ENCODE measurements at regions of chr12 and their contacts with region 1.

Region 1: DNA sequence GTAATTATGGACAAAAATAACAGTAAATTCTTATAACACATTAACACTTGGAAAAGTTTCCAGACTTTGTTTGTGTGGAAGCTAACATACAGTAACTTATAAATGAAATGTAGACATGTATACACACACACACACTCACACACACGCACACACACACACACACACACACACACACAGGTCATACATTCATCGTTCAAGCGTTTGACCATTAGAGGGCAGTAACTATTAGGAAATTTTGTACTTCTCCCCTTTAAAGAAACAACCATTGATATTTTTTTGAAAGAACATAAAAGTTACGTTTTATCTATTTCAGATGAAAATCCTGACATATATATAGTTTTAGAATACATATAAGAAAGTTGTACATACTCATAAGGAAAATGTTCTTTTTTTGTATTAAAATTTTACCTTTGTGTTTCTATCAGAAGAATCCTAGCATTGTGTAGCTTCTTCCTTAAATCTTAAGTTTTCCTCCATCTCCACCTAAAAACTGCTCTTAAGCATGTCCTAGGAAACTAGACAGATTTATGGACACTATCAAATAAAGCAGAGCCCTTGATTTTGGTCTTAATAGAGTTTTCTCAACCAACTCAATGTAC is 29.0 kb downstream of the PTPRQ start:
- DNase-seq: peak; percentile 3 to 47
- H3K4me3 ChIP-seq: no peak overlapping the region
- H3K27ac ChIP-seq: no peak overlapping the region
- H3K4me1 ChIP-seq: no peaks in the 10 kb centered on the region
- H3K27me3 ChIP-seq: no peaks in the 10 kb centered on the region
- CTCF ChIP-seq: peak; percentile 69

Region 2: GRCh38 chr12:80400571-80400991 is 72.4 kb before region 1 on chr12:
- CTCF ChIA-PET with region 1: no interaction called
- POLR2A ChIA-PET with region 1: no interaction called
- intact Hi-C with region 1: no loop called
- DNase-seq: no peak
- H3K4me3 ChIP-seq: no peak overlapping the region
- H3K27ac ChIP-seq: no peak overlapping the region
- H3K4me1 ChIP-seq: no peaks in the 10 kb centered on the region; the same call in 1 of the 2 replicates
- H3K27me3 ChIP-seq: no peaks in the 10 kb centered on the region
- CTCF ChIP-seq: no peak

Region 3: GRCh38 chr12:80598004-80598606 is 125.1 kb after region 1 on chr12:
- CTCF ChIA-PET with region 1: no interaction called
- POLR2A ChIA-PET with region 1: no interaction called
- intact Hi-C with region 1: loop called (anchors 5 kb)
- DNase-seq: no peak
- H3K4me3 ChIP-seq: no peak overlapping the region
- H3K27ac ChIP-seq: no peak overlapping the region
- H3K4me1 ChIP-seq: no peaks in the 10 kb centered on the region
- H3K27me3 ChIP-seq: no peaks in the 10 kb centered on the region
- CTCF ChIP-seq: peak; percentile 32; the same call in 1 of the 2 replicates

Region 4: GRCh38 chr12:80622271-80622670 is 149.3 kb after region 1 on chr12:
- CTCF ChIA-PET with region 1: no interaction called
- POLR2A ChIA-PET with region 1: no interaction called
- intact Hi-C with region 1: loop called (anchors 5 kb)
- DNase-seq: no peak
- H3K4me3 ChIP-seq: no peak overlapping the region
- H3K27ac ChIP-seq: no peak overlapping the region
- H3K4me1 ChIP-seq: no peaks in the 10 kb centered on the region
- H3K27me3 ChIP-seq: no peaks in the 10 kb centered on the region
- CTCF ChIP-seq: no peak

Region 5: GRCh38 chr12:80763874-80764273 is 290.9 kb after region 1 on chr12:
- CTCF ChIA-PET with region 1: no interaction called
- POLR2A ChIA-PET with region 1: no interaction called
- intact Hi-C with region 1: loop called (anchors 1 kb)
- DNase-seq: peak; percentile 7 to 40
- H3K4me3 ChIP-seq: no peak overlapping the region
- H3K27ac ChIP-seq: no peak overlapping the region
- H3K4me1 ChIP-seq: no peaks in the 10 kb centered on the region
- H3K27me3 ChIP-seq: no peaks in the 10 kb centered on the region
- CTCF ChIP-seq: peak; percentile 85

Region 6: GRCh38 chr12:81086342-81086741 is 613.3 kb after region 1 on chr12:
- CTCF ChIA-PET with region 1: no interaction called
- POLR2A ChIA-PET with region 1: no interaction called
- intact Hi-C with region 1: no loop called
- DNase-seq: no peak
- H3K4me3 ChIP-seq: no peak overlapping the region
- H3K27ac ChIP-seq: no peak overlapping the region
- H3K4me1 ChIP-seq: 0 out of 2 replicates have a peak, but pooled peaks cover 5% of the 10 kb centered on the region
- H3K27me3 ChIP-seq: no peaks in the 10 kb centered on the region
- CTCF ChIP-seq: no peak

Measured in PC-9 (cell line).